Psoas muscle (tissue), 8 donors: ENCODE measurements at regions of chr6 and their contacts with region 1.

Region 1: DNA sequence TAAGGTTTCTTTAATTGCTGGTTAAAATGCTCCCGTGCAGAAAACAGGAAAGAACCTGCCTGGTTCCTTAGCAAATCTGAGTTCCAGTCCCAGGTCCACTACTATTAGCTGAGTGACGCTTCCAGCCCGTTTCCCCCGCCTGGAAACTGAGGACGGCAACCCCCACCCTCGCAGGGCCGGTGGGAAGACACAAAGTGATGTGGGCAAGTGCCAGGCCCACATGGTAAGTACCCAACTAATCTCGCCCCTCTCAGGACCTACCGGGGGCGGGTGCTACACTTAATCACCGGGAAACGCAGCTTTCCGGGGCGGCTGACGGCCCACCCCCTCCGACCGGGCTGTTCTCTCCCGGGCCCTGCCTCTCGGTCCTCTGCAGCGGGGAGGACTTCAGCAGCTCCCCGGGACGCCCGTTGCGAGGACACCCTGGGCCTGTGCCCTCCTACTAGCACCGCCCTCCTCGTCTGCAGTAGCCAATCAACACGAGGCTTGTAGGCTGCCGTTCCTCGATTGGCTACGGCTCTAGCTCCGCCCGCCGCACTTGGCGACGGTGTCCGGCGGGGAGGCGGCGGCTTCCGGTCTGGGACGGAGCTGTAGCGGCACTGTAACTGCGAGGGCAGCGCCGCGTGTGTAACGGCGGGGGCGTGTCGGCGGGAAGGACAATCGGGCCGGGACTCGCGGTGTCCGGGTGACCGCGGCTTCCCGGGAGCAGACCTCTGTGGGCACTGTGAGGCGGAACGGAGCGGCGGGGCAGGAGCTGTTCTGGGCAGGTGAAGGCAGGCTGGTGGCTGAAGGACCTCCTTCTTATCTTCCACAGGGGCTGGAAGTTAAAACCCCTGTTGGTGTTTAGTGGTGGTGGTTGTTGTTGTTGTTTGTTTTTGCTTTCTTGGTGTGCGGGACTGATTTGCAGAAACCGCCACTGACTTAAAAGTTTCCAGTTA is at the start of gene ZBTB9:
- DNase-seq: peak; percentile 96 to 98
- ATAC-seq: peak; percentile 100
- H3K4me3 ChIP-seq: peak within 1 kb of the TSS; percentile 83
- H3K27ac ChIP-seq: peak within 1 kb of the TSS; percentile 82
- H3K4me1 ChIP-seq: peaks cover 4% of the 10 kb centered on the region
- H3K27me3 ChIP-seq: no peaks in the 10 kb centered on the region
- CTCF ChIP-seq: no peak
- total RNA-seq, gene ZBTB9: 2.4 to 4.9 (median 3.9) TPM

Region 2: DNA sequence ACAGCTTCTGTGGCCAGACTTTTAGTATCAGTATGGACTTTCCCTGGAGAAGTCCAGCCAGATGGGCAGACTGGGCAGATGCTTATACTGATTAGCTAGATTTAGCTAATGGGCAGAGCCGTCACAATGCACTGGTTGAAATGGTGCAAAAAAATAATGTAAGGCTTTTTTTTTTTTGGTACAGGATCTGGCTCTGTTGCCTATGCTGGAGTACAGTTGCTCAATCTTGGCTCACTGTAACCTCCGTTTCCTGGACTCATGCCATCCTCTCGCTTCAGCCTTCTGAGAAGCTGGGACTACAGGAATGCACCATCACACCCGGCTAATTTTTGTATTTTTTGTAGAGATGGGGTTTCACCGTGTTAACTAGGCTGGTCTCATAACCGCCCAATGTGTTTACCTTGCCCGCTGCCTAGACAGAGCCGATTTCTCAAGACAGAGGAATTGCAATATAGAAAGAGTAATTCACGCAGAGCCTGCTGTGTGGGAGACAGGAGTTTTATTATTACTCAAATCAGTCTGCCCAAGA is 79.1 kb before region 1 on chr6:
- intact Hi-C with region 1: loop called in 1 of 2 experiments (anchors 5 kb)
- DNase-seq: peak; percentile 60 to 77
- ATAC-seq: peak; percentile 70 to 95 (median 84)
- H3K4me3 ChIP-seq: no peak overlapping the region
- H3K27ac ChIP-seq: peak overlapping the region; percentile 36
- H3K4me1 ChIP-seq: peaks cover 28% of the 10 kb centered on the region
- H3K27me3 ChIP-seq: no peaks in the 10 kb centered on the region
- CTCF ChIP-seq: no peak

Region 3: DNA sequence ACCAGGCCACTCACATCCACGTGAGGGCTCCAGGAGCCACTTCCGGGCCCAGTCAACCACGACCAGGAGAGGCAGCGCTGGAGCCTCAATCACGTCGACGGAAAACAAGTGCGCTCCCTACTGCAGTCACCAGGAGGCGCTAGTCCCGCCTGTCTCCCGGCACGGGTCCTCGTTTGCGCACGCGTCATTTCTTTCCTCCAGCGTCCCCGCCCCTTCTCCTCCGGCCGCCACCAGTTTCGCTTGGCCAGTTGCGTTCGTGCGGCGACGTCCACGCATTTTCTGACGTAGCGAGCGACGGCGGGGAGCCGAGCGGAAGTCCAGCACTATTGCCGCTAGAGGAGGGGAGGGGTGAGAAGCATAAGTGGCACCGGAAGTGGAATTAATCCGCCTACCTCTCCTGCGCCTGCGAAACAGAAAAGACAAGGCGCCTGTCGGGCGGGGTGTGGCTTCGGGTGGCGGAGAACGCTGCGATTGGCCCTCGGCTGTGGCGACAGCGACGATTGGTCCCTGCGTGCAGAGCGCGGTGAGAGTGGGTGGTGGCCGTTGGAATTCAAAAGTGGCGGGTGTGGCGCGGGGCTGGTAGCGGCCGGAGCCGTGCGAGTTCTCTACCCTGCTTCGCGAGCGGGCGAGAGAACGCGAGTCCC is 62.9 kb before region 1 on chr6 and contains the start of gene KIFC1:
- intact Hi-C with region 1: loop called in 1 of 2 experiments (anchors 2 kb)
- DNase-seq: peak; percentile 99 to 100
- ATAC-seq: peak; percentile 95 to 98 (median 97)
- H3K4me3 ChIP-seq: peak within 1 kb of the TSS; percentile 73
- H3K27ac ChIP-seq: peak within 1 kb of the TSS; percentile 92
- H3K4me1 ChIP-seq: peaks cover 7% of the 10 kb centered on the region
- H3K27me3 ChIP-seq: no peaks in the 10 kb centered on the region
- CTCF ChIP-seq: peak; percentile 96
- total RNA-seq, gene KIFC1: 0.17 to 0.27 (median 0.25) TPM in 3 of 4 donors, not detected in the other

Region 4: DNA sequence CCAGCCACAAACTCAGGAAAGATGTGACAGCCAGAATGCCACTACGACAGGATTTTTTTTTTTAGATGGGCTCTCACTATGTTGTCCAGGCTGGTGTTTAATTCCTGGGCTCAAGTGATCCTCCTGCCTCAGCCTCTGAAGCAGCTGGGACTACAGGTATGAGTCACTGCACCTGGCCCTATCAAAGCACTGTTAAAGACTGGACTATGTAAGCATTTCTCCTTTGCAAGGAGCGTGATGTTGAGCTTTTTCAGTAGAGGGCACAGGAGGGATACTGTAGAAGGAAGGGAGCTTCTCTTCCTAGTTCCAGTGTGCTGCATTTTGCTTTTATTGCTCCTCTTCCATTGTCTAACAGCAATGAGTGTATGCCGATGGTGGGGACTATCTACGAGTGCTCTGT is 35.9 kb after region 1 on chr6:
- intact Hi-C with region 1: no loop called
- DNase-seq: no peak
- ATAC-seq: no peak
- H3K4me3 ChIP-seq: no peak overlapping the region
- H3K27ac ChIP-seq: no peak overlapping the region
- H3K4me1 ChIP-seq: no peaks in the 10 kb centered on the region
- H3K27me3 ChIP-seq: peaks cover 0 to 10% (median 2%) of the 10 kb centered on the region in 3 donors
- CTCF ChIP-seq: no peak

Region 5: GRCh38 chr6:33566182-33567084 is 112.2 kb after region 1 on chr6:
- intact Hi-C with region 1: loop called (anchors 5 to 10 kb)
- DNase-seq: no peak
- ATAC-seq: no peak
- H3K4me3 ChIP-seq: no peak overlapping the region
- H3K27ac ChIP-seq: no peak overlapping the region
- H3K4me1 ChIP-seq: no peaks in the 10 kb centered on the region
- H3K27me3 ChIP-seq: no peaks in the 10 kb centered on the region
- CTCF ChIP-seq: no peak

Region 6: DNA sequence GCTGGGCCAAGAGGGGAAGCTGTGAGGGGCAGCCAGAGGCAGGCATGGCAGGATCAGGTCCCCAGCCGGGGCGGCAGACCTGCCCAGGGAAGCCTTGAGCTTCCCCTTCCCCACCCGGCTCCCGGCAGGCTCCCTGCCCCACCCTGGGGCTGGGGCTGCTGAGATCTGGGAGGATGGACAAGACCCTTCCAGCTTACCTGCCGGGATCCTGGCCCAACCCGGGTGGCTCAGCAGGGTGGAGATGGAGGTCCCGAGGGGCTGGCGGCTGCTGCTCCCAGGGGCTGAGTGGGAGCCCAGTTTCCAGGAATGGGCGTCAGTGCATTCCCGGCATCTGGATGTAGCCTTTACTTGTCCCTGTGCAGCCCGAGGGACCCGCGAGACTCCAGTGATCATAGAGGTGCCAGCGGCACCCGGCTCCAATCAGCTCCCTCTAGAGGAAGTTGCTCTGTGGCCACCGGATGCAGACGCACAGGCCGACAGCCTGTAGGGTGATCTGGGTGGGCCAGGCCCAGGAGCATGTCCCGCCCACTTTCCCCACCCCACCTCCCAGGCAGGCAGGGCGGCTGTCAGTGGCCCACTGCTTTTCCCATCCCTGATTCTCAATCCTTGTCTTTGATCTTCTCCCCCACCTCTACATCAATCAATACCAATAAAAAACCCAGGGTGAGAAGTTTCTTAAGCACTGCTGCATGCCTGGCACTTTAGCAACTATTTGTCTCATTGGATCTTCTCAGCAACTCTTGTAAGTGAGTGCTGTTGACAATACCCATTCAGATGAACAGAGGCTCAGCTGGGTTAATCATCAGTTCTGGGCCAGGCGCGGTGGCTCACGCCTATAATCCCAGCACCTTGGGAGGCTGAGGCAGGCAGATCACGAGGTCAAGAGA is 125.8 kb after region 1 on chr6 and contains the start of gene BAK1:
- intact Hi-C with region 1: loop called (anchors 5 to 10 kb)
- DNase-seq: peak; percentile 89 to 94
- ATAC-seq: peak; percentile 92 to 98 (median 95)
- H3K4me3 ChIP-seq: peak within 1 kb of the TSS; percentile 89
- H3K27ac ChIP-seq: peak within 1 kb of the TSS; percentile 73
- H3K4me1 ChIP-seq: peaks cover 3% of the 10 kb centered on the region
- H3K27me3 ChIP-seq: no peaks in the 10 kb centered on the region
- CTCF ChIP-seq: peak; percentile 46
- total RNA-seq, gene BAK1: 10.3 to 22.1 (median 17.6) TPM